ENCODE measurements at regions of chr16 and their contacts with region 1.

Region 1: GRCh38 chr16:11797166-11797956 is at the start of gene ZC3H7A:
- DNase-seq: peak; percentile 98
- H3K4me3 ChIP-seq: peak within 1 kb of the TSS; percentile 83
- H3K27ac ChIP-seq: peak within 1 kb of the TSS; percentile 85
- H3K4me1 ChIP-seq: peaks cover 19% of the 10 kb centered on the region
- H3K27me3 ChIP-seq: no peaks in the 10 kb centered on the region
- CTCF ChIP-seq: peak; percentile 55
- total RNA-seq, gene ZC3H7A: 65.0 and 67.2 TPM in 2 replicates

Region 2: DNA sequence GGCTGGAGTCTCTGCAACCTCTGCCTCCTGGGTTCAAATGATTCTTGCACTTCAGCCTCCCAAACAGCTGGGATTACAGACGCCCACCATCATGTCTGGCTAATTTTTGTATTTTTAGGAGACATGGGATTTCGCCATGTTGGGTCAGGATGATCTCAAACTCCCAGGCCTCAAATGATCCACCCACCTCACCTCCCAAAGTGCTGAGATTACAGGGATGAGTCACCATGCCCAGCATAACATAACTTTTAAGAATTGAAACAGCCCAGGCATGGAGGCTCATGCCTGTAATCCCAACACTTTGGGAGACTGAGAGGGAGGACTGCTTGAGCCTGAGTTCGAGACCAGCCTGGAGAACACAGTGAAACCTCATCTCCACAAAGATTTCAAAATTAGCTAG is 51.5 kb after region 1 on chr16:
- CTCF ChIA-PET with region 1: no interaction called
- POLR2A ChIA-PET with region 1: no interaction called
- intact Hi-C with region 1: loop called (anchors 5 kb)
- DNase-seq: no peak
- H3K4me3 ChIP-seq: no peak overlapping the region
- H3K27ac ChIP-seq: no peak overlapping the region
- H3K4me1 ChIP-seq: peaks cover 10% of the 10 kb centered on the region
- H3K27me3 ChIP-seq: no peaks in the 10 kb centered on the region
- CTCF ChIP-seq: no peak

Region 3: DNA sequence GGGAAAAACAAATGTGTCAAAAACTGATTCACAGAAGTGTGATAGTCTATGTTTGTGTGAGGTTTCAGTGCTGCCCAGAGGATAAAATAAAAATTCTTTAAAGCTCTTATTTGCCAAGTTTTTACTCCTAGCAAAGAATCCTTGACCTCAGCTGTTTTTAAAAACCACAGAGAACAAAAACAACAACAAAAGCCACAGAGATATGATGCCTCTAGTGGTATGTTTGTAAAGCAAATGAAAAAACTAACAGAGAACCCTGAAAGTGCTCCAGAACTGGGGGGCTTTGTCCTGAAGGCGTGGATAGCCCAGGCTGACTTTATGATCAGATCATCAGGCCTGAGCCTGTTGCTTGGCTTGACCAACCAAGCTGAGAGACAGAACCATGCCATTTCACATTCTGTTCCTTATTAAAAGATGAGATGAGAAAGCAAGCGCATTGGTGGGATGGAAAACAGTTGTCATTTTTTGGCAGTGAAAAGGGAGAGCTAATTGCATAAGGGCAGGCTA is 595.3 kb after region 1 on chr16:
- CTCF ChIA-PET with region 1: no interaction called
- POLR2A ChIA-PET with region 1: no interaction called
- intact Hi-C with region 1: no loop called
- DNase-seq: no peak
- H3K4me3 ChIP-seq: no peak overlapping the region
- H3K27ac ChIP-seq: no peak overlapping the region
- H3K4me1 ChIP-seq: peaks cover 2% of the 10 kb centered on the region
- H3K27me3 ChIP-seq: peaks cover 79% of the 10 kb centered on the region
- CTCF ChIP-seq: peak; percentile 33; the same call in 1 of the 2 replicates